ENCODE measurements at regions of chr3 and their contacts with region 1.

Region 1: DNA sequence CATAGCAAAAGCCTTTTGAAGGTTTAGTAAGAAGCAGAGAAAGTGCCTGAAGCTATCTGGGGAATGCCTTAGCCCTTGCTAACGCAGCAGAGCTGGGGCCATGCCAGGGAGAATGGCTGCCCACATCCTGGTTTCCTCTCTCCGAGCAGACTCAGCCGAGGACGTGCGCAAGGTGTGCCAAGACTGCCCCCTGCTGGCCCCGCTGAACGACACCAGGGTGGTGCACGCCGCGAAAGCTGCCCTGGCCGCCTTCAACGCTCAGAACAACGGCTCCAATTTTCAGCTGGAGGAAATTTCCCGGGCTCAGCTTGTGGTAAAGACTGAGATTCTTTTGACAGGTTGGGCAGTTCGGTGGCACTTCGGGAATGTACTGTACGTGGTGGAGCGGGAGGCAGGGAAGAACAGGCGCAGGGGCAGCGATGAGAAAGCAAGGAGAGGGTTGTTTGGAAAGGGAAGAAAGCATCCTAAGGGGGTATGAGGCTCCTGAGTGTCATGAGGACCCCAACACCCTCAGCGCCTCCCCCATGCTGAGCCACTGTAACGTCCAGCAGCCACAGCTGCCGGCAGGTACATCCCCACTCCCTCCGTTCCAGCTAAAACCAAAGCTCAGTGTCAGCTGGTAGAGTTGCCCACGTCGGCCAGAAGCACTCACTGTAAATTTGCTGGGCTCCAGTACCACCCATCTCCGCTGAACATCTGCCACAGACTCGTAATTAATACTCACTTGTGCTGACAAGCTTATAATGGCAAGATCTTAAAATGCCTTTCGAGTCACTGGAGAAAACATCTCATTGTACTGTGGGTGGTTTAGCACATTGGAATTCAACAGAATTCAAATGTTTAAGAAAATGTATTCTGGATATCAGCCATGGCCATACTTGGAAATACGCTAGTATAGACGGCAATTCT is 4.4 kb downstream of the AHSG start:
- DNase-seq: peak; percentile 99 to 100
- H3K4me3 ChIP-seq: peak overlapping the region; percentile 12; the same call in 1 of the 2 replicates
- H3K27ac ChIP-seq: no peak overlapping the region
- H3K4me1 ChIP-seq: peaks cover 16% of the 10 kb centered on the region
- H3K27me3 ChIP-seq: no peaks in the 10 kb centered on the region
- CTCF ChIP-seq: peak; percentile 99

Region 2: GRCh38 chr3:186540221-186540834 is 77.0 kb before region 1 on chr3:
- CTCF ChIA-PET with region 1: interaction called, 12 read pairs
- POLR2A ChIA-PET with region 1: interaction called, 3 read pairs
- intact Hi-C with region 1: loop called (anchors 1 kb)
- DNase-seq: peak; percentile 79 to 86
- H3K4me3 ChIP-seq: no peak overlapping the region; the same call in 1 of the 2 replicates
- H3K27ac ChIP-seq: no peak overlapping the region
- H3K4me1 ChIP-seq: 0 out of 2 replicates have a peak, but pooled peaks cover 3% of the 10 kb centered on the region
- H3K27me3 ChIP-seq: no peaks in the 10 kb centered on the region
- CTCF ChIP-seq: peak; percentile 97

Region 3: DNA sequence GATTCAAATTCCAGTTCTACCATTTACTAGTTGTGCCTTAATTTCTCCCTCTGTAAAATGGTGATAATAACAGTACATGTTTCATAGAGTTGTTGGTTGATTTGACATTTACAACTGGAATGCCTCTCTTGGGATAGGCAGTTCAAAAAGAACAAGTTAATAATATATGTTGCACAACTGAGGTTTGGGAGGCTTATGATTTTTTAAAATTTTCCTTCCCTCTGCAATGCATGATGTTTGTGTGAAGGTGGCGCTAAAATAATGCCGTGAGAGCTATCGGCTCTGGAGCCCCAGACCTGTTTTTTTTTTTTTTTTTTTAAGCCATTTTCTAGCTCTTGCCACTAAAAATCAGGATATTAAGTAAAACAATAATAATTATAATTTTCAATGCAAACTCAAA is 28.2 kb before region 1 on chr3:
- CTCF ChIA-PET with region 1: interaction called, 16 read pairs
- POLR2A ChIA-PET with region 1: interaction called, 7 read pairs
- intact Hi-C with region 1: loop called (anchors 1 kb)
- DNase-seq: peak; percentile 18 to 62
- H3K4me3 ChIP-seq: peak overlapping the region; percentile 38; the same call in 1 of the 2 replicates
- H3K27ac ChIP-seq: peak overlapping the region; percentile 87
- H3K4me1 ChIP-seq: peaks cover 40% of the 10 kb centered on the region
- H3K27me3 ChIP-seq: no peaks in the 10 kb centered on the region
- CTCF ChIP-seq: peak; percentile 40; the same call in 1 of the 2 replicates

Region 4: GRCh38 chr3:186754006-186754405 is 136.7 kb after region 1 on chr3:
- CTCF ChIA-PET with region 1: interaction called, 14 read pairs
- POLR2A ChIA-PET with region 1: no interaction called
- intact Hi-C with region 1: loop called (anchors 1 kb)
- DNase-seq: no peak
- H3K4me3 ChIP-seq: peak overlapping the region; percentile 46; the same call in 1 of the 2 replicates
- H3K27ac ChIP-seq: peak overlapping the region; percentile 91
- H3K4me1 ChIP-seq: peaks cover 31% of the 10 kb centered on the region
- H3K27me3 ChIP-seq: no peaks in the 10 kb centered on the region
- CTCF ChIP-seq: no peak

Region 5: GRCh38 chr3:186806089-186807055 is 189.1 kb after region 1 on chr3 and contains the start of gene RFC4:
- CTCF ChIA-PET with region 1: interaction called, 3 read pairs
- POLR2A ChIA-PET with region 1: no interaction called
- intact Hi-C with region 1: loop called (anchors 5 kb)
- DNase-seq: peak; percentile 74 to 87
- H3K4me3 ChIP-seq: peak within 1 kb of the TSS; percentile 89
- H3K27ac ChIP-seq: peak within 1 kb of the TSS; percentile 79
- H3K4me1 ChIP-seq: peaks cover 29% of the 10 kb centered on the region
- H3K27me3 ChIP-seq: no peaks in the 10 kb centered on the region
- CTCF ChIP-seq: no peak
- total RNA-seq, gene RFC4: 93.8 and 94.5 TPM in 2 replicates

Region 6: DNA sequence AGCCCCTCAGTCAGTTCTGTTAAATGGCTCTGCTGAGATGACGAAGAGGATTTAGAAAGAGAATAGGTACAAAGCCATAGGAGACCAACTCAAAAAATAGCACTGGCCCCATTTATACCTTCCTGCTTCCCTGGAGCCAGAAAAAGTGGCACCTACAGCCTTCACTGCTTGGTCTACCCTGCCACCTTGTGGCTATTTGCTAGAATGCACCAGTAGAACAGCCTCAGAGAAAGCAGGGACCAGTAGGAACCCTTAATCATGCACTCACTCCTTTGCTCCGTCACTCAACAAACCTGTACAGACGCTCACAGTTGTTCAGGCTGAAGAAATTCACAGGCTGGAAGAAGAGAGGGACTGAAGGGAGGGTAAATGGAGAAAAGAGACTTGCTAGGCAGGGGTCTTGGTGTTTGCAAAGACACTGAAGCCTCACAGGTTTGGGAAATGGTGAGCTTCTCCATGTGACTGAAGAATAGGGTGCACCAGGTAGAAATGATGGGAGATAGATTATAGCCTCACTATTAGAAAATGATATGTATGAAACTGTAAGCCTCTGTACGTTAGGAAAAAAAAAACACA is 1097.2 kb after region 1 on chr3:
- CTCF ChIA-PET with region 1: no interaction called
- POLR2A ChIA-PET with region 1: no interaction called
- intact Hi-C with region 1: loop called (anchors 10 kb)
- DNase-seq: peak; percentile 74 to 82
- H3K4me3 ChIP-seq: no peak overlapping the region
- H3K27ac ChIP-seq: no peak overlapping the region
- H3K4me1 ChIP-seq: no peaks in the 10 kb centered on the region
- H3K27me3 ChIP-seq: no peaks in the 10 kb centered on the region
- CTCF ChIP-seq: peak; percentile 99

Measured in PC-9 (cell line).